ENCODE measurements at regions of chr14 and their contacts with region 1.

Region 1: DNA sequence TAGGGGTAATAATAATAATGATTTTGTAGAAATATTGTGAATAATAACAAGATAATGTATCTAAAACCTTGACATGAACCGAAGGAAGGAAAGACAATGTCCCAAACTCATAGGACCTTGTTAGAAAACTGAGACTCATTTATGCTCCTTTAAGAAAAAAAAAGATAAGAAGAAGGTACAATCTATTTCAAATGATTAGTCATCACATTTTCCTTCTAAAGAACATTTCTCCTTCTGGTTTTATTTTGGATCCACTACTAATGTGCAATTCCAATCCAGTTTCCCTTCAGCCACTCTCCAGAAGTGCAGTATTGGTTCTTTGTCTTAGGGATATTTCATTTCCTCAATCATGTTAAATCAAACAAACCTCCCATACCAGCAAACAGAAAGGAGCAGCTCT is 526.7 kb downstream of the FUT8 start:
- DNase-seq: no peak
- H3K4me3 ChIP-seq: no peak overlapping the region
- H3K27ac ChIP-seq: no peak overlapping the region
- H3K4me1 ChIP-seq: no peaks in the 10 kb centered on the region
- H3K27me3 ChIP-seq: no peaks in the 10 kb centered on the region
- CTCF ChIP-seq: no peak

Region 2: DNA sequence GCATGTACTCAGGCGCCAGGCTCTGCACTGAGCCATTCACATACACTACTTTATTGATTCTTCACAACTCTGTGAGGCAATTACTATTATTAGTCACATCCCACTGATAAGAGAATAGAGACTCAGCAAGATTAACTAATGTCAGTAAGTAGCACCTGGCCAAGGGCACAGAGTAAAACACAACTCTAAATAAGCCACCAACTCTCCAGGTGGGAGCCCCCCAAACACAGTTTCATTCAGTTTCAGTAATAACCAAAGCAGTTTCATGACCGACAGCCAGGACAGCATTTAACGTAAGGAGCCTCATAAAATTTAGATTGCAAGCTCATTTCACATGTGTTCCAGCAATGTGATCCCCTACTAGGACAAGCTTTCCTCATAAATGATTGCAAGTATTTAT is 223.8 kb after region 1 on chr14:
- CTCF ChIA-PET with region 1: interaction called, 10 read pairs
- POLR2A ChIA-PET with region 1: no interaction called
- intact Hi-C with region 1: no loop called
- DNase-seq: no peak
- H3K4me3 ChIP-seq: no peak overlapping the region
- H3K27ac ChIP-seq: no peak overlapping the region
- H3K4me1 ChIP-seq: no peaks in the 10 kb centered on the region
- H3K27me3 ChIP-seq: no peaks in the 10 kb centered on the region
- CTCF ChIP-seq: no peak

Measured in A673 (cell line).